SK-N-SH (cell line): ENCODE measurements at regions of chr2 and their contacts with region 1.

Region 1: GRCh38 chr2:96856776-96857673 is 791 bp downstream of the ANKRD39 start:
- DNase-seq: no peak
- H3K4me3 ChIP-seq: peak overlapping the region; percentile 75 to 80
- H3K27ac ChIP-seq: peak overlapping the region; percentile 34 to 82; a peak in 3 of 4 replicates
- H3K4me1 ChIP-seq: peaks cover 0 to 18% of the 10 kb centered on the region in 2 experiments; a peak in 1 of 4 replicates
- H3K27me3 ChIP-seq: no peaks in the 10 kb centered on the region
- CTCF ChIP-seq: no peak
- EP300 ChIP-seq: no peak
- RAD21 ChIP-seq: no peak

Region 2: GRCh38 chr2:96685577-96686459 is 171.2 kb before region 1 on chr2:
- CTCF ChIA-PET with region 1: no interaction called
- POLR2A ChIA-PET with region 1: no interaction called
- DNase-seq: peak; percentile 84
- H3K4me3 ChIP-seq: no peak overlapping the region
- H3K27ac ChIP-seq: peak overlapping the region in 1 of 2 experiments; percentile 50; a peak in 1 of 4 replicates
- H3K4me1 ChIP-seq: peaks cover 0 to 17% of the 10 kb centered on the region in 2 experiments; a peak in 1 of 4 replicates
- H3K27me3 ChIP-seq: no peaks in the 10 kb centered on the region
- CTCF ChIP-seq: no peak
- EP300 ChIP-seq: no peak
- RAD21 ChIP-seq: no peak

Region 3: GRCh38 chr2:96773922-96774321 is 83.1 kb before region 1 on chr2:
- CTCF ChIA-PET with region 1: no interaction called
- POLR2A ChIA-PET with region 1: no interaction called
- DNase-seq: no peak
- H3K4me3 ChIP-seq: no peak overlapping the region
- H3K27ac ChIP-seq: no peak overlapping the region
- H3K4me1 ChIP-seq: peaks cover 0 to 15% of the 10 kb centered on the region in 2 experiments; a peak in 1 of 4 replicates
- H3K27me3 ChIP-seq: no peaks in the 10 kb centered on the region
- CTCF ChIP-seq: no peak
- EP300 ChIP-seq: no peak
- RAD21 ChIP-seq: no peak

Region 4: DNA sequence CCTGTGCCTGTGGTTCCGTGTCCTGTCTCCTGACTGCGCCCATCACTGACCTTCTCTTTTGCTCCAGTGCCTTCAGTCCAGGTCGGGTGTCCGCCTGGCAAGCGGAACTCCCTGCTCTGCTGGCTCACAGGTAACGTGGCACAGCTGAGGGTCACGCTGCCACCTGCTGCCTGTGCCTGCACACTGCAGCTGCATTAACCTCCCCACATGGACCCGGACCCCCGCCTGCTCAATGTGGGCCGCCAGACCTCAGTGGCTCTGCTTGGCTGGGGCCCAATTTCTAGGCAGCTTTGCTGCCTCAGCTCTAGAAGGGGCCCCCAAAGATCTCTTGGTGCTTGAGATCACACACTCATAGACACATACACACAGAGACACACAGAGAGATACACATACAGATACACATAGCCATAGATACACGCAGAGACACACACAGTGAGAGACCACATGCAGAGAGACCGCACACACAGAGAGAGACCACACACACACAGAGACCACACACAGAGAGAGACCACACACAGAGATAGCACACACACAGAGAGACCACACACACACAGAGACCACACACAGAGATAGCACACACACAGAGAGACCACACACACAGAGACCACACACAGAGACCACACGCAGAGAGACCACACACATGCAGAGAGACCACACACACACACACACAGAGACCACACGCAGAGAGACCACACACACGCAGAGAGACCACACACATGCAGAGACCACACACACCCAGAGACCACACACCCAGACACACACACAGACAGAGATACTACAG is 55.8 kb before region 1 on chr2:
- CTCF ChIA-PET with region 1: interaction called, 12 read pairs
- POLR2A ChIA-PET with region 1: no interaction called
- DNase-seq: peak; percentile 93
- H3K4me3 ChIP-seq: peak overlapping the region in 1 of 2 experiments; percentile 40; a peak in 1 of 4 replicates
- H3K27ac ChIP-seq: peak overlapping the region in 1 of 2 experiments; percentile 4; a peak in 1 of 4 replicates
- H3K4me1 ChIP-seq: peaks cover 0 to 12% of the 10 kb centered on the region in 2 experiments; a peak in 1 of 4 replicates
- H3K27me3 ChIP-seq: no peaks in the 10 kb centered on the region
- CTCF ChIP-seq: peak; percentile 81
- EP300 ChIP-seq: no peak
- RAD21 ChIP-seq: peak; percentile 84

Region 5: GRCh38 chr2:96842600-96842999 is 14.4 kb before region 1 on chr2:
- CTCF ChIA-PET with region 1: interaction called, 24 read pairs
- POLR2A ChIA-PET with region 1: interaction called, 6 read pairs
- DNase-seq: no peak
- H3K4me3 ChIP-seq: no peak overlapping the region
- H3K27ac ChIP-seq: no peak overlapping the region
- H3K4me1 ChIP-seq: peaks cover 0 to 7% of the 10 kb centered on the region in 2 experiments; a peak in 1 of 4 replicates
- H3K27me3 ChIP-seq: no peaks in the 10 kb centered on the region
- CTCF ChIP-seq: no peak
- EP300 ChIP-seq: no peak
- RAD21 ChIP-seq: no peak

Region 6: DNA sequence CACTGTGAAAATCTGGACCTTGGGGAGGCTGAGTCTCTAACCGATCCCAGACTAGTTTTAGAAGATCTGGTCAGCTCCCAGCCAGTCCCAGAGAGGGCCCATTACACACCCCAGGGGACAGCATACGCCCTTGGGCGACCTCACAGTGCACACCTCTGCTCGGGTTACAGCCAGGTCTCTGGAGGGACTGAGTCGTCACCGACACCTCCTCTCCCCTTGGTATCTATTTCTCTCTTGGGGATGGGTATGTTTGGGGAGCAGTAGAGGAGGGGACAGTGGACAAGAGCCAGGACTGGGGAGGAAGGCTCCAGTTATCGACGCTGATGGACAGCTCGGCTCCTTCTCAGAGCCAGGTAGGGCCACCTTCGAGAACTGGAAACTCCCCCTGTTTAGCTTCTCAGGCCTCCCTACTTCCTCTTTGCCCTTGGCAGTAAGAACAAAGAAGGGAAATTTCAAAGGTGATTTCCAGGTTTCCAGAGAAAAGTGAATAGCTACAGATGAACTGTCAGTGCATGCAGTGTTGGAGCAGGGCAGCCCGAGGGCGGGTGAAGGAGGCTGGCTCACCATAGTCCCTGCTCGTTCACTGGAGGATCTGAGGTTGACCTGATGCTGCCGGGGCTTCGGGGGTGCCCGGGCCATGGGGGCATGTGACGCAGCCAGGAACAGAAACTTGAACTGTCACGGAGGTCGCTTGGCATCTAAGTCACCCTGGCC is 17.2 kb after region 1 on chr2:
- CTCF ChIA-PET with region 1: interaction called, 59 read pairs
- POLR2A ChIA-PET with region 1: interaction called, 27 read pairs
- DNase-seq: no peak
- H3K4me3 ChIP-seq: no peak overlapping the region
- H3K27ac ChIP-seq: no peak overlapping the region
- H3K4me1 ChIP-seq: peaks cover 9 to 57% of the 10 kb centered on the region in 2 experiments; a peak in 2 of 4 replicates
- H3K27me3 ChIP-seq: no peaks in the 10 kb centered on the region
- CTCF ChIP-seq: no peak
- EP300 ChIP-seq: no peak
- RAD21 ChIP-seq: no peak

Region 7: GRCh38 chr2:96916156-96916630 is 59.2 kb after region 1 on chr2:
- CTCF ChIA-PET with region 1: interaction called, 13 read pairs
- POLR2A ChIA-PET with region 1: interaction called, 4 read pairs
- DNase-seq: no peak
- H3K4me3 ChIP-seq: no peak overlapping the region
- H3K27ac ChIP-seq: no peak overlapping the region
- H3K4me1 ChIP-seq: peaks cover 0 to 7% of the 10 kb centered on the region in 2 experiments; a peak in 1 of 4 replicates
- H3K27me3 ChIP-seq: peaks cover 9% of the 10 kb centered on the region; the same call in 1 of the 2 replicates
- CTCF ChIP-seq: no peak; the same call in 1 of the 2 replicates
- EP300 ChIP-seq: no peak
- RAD21 ChIP-seq: no peak

Region 8: DNA sequence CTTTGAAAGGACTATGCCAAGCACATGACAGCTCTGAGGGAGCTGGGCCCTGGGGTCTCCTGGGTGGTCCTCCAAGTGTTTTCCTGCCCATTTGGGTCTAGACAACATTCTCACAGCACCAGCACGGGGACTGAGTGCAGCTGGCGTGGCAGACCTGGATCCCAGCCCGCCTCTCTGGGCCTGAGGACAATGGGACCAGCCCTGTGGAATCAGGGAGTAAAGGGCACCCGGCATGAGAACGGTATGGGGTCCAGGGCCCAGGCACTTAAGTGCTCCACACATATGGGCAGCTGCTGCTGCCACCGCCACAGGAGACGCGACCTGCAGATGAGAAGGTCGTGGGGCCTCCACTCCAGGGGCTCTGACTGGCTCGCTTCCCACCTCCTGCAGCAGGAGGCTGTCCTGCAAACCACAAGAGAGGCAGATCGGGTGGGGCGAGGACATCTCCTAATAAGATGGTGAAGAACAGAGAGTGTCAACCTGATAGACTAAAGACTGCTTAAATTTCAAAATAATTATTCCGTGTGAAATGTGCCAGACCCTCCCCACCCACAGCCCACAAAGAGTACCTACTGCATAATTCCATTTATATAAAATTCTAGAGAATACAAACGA is 83.1 kb after region 1 on chr2:
- CTCF ChIA-PET with region 1: interaction called, 332 read pairs
- POLR2A ChIA-PET with region 1: no interaction called
- DNase-seq: no peak
- H3K4me3 ChIP-seq: no peak overlapping the region
- H3K27ac ChIP-seq: no peak overlapping the region
- H3K4me1 ChIP-seq: peaks cover 0 to 3% of the 10 kb centered on the region in 2 experiments; a peak in 1 of 4 replicates
- H3K27me3 ChIP-seq: no peaks in the 10 kb centered on the region
- CTCF ChIP-seq: no peak
- EP300 ChIP-seq: no peak
- RAD21 ChIP-seq: no peak

Region 9: GRCh38 chr2:96960153-96960961 is 103.3 kb after region 1 on chr2:
- CTCF ChIA-PET with region 1: interaction called, 332 read pairs
- POLR2A ChIA-PET with region 1: no interaction called
- DNase-seq: peak; percentile 93
- H3K4me3 ChIP-seq: no peak overlapping the region; a peak in 1 of 4 replicates
- H3K27ac ChIP-seq: no peak overlapping the region
- H3K4me1 ChIP-seq: peaks cover 0 to 7% of the 10 kb centered on the region in 2 experiments; a peak in 1 of 4 replicates
- H3K27me3 ChIP-seq: no peaks in the 10 kb centered on the region
- CTCF ChIP-seq: peak; percentile 85
- EP300 ChIP-seq: no peak
- RAD21 ChIP-seq: peak; percentile 93